ENCODE measurements at regions of chr10 and their contacts with region 1.

Region 1: GRCh38 chr10:120600871-120601649 is 144.0 kb downstream of the PLPP4 start:
- DNase-seq: peak; percentile 67 to 93 (median 90)
- H3K4me3 ChIP-seq: peak overlapping the region in 1 of 7 experiments; percentile 11
- H3K27ac ChIP-seq: no peak overlapping the region
- H3K4me1 ChIP-seq: peaks cover 0 to 14% (median 11%) of the 10 kb centered on the region in 4 experiments
- H3K27me3 ChIP-seq: no peaks in the 10 kb centered on the region

Region 2: GRCh38 chr10:120423431-120424197 is 177.4 kb before region 1 on chr10:
- CTCF ChIA-PET with region 1: interaction called, 11 read pairs
- POLR2A ChIA-PET with region 1: no interaction called
- DNase-seq: peak; percentile 58 to 71 (median 68)
- H3K4me3 ChIP-seq: no peak overlapping the region
- H3K27ac ChIP-seq: no peak overlapping the region
- H3K4me1 ChIP-seq: no peaks in the 10 kb centered on the region
- H3K27me3 ChIP-seq: no peaks in the 10 kb centered on the region

Region 3: GRCh38 chr10:120570418-120570817 is 30.6 kb before region 1 on chr10:
- CTCF ChIA-PET with region 1: no interaction called
- POLR2A ChIA-PET with region 1: no interaction called
- DNase-seq: no peak
- H3K4me3 ChIP-seq: no peak overlapping the region
- H3K27ac ChIP-seq: no peak overlapping the region
- H3K4me1 ChIP-seq: no peaks in the 10 kb centered on the region
- H3K27me3 ChIP-seq: peaks cover 0 to 2% (median 0%) of the 10 kb centered on the region in 5 experiments

Region 4: DNA sequence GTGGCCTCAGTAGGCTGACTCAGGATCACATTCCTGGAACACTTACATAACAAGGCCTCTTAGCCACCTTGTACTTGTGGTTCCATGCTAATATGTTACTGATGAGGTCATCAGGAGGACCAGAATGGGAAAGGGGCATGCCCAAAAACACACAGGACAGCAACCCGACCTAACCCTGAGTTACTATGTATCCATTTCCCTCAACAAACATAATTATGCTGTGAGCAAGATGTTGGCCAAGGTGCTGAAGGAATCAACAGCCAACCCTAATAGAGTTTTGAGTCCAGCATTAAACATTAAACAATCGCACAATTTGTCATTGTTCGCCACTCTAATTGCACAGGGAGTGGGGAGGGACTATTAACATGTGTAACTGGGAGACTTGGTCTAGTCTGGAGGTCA is 14.6 kb before region 1 on chr10:
- CTCF ChIA-PET with region 1: interaction called, 21 read pairs
- POLR2A ChIA-PET with region 1: no interaction called
- DNase-seq: no peak
- H3K4me3 ChIP-seq: no peak overlapping the region
- H3K27ac ChIP-seq: no peak overlapping the region
- H3K4me1 ChIP-seq: no peaks in the 10 kb centered on the region
- H3K27me3 ChIP-seq: no peaks in the 10 kb centered on the region

Region 5: DNA sequence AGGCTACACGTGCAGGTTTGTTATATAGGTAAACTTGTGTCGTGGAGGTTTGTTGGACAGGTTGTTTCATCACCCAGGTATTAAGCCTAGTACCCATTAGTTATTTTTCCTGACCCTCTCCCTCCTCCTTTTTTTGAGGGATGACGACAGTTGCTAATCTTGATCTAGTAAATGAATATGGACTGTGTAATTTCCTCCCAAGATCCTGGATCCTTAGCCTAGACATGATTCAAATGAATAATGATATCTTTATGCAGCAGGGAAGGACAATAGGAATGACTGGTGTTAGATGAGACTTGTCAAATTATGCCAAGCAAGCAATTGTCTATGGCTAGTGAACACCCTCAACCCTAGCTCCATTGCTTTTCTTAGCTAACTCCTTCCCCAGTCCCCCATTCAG is 12.1 kb after region 1 on chr10:
- CTCF ChIA-PET with region 1: interaction called, 13 read pairs
- POLR2A ChIA-PET with region 1: no interaction called
- DNase-seq: no peak
- H3K4me3 ChIP-seq: no peak overlapping the region
- H3K27ac ChIP-seq: no peak overlapping the region
- H3K4me1 ChIP-seq: no peaks in the 10 kb centered on the region
- H3K27me3 ChIP-seq: no peaks in the 10 kb centered on the region

Region 6: GRCh38 chr10:120735773-120736371 is 134.8 kb after region 1 on chr10:
- CTCF ChIA-PET with region 1: interaction called, 11 read pairs
- POLR2A ChIA-PET with region 1: no interaction called
- DNase-seq: peak in 2 of 3 donors; percentile 53 to 55
- H3K4me3 ChIP-seq: no peak overlapping the region
- H3K27ac ChIP-seq: no peak overlapping the region
- H3K4me1 ChIP-seq: no peaks in the 10 kb centered on the region
- H3K27me3 ChIP-seq: no peaks in the 10 kb centered on the region